ENCODE measurements at regions of chr4 and their contacts with region 1.

Region 1: DNA sequence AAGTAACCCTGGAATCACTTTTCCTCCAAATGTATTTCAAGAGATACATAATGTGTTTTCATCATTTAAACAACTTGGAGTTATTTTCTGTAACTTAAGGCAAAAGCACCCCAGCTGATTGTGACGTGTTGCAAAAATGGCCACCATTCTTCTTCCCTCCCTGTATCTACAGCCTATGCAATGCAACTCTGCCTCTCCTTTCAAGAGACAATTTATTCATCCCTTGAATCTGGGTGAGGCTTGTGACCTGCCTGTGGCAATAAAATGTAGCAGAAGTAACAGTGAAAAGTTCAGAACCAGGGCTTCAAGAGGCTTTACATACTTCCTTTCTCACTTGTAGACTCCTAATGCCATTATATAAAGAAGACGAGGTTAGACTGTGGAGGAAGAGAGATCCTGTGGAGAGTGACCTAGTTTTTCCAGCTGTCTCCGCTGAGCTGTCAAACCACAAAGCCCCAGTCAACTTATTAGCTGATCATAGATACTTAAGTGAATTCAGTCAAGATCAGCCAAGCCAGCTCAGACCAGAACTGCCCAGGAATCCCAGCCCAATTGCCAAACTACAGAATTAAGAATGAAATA is 81.0 kb upstream of the KLF3 start:
- DNase-seq: peak; percentile 45
- H3K4me3 ChIP-seq: no peak overlapping the region
- CTCF ChIP-seq: no peak

Region 2: GRCh38 chr4:38509551-38509950 is 73.4 kb before region 1 on chr4:
- in situ Hi-C with region 1: no loop called
- DNase-seq: no peak
- H3K4me3 ChIP-seq: no peak overlapping the region
- CTCF ChIP-seq: no peak

Region 3: GRCh38 chr4:38529189-38530115 is 53.5 kb before region 1 on chr4:
- in situ Hi-C with region 1: loop called (anchors 10 kb)
- DNase-seq: no peak
- H3K4me3 ChIP-seq: no peak overlapping the region
- CTCF ChIP-seq: no peak

Measured in astrocyte of the cerebellum (primary cell).